BJ (cell line): ENCODE measurements at regions of chr19 and their contacts with region 1.

Region 1: DNA sequence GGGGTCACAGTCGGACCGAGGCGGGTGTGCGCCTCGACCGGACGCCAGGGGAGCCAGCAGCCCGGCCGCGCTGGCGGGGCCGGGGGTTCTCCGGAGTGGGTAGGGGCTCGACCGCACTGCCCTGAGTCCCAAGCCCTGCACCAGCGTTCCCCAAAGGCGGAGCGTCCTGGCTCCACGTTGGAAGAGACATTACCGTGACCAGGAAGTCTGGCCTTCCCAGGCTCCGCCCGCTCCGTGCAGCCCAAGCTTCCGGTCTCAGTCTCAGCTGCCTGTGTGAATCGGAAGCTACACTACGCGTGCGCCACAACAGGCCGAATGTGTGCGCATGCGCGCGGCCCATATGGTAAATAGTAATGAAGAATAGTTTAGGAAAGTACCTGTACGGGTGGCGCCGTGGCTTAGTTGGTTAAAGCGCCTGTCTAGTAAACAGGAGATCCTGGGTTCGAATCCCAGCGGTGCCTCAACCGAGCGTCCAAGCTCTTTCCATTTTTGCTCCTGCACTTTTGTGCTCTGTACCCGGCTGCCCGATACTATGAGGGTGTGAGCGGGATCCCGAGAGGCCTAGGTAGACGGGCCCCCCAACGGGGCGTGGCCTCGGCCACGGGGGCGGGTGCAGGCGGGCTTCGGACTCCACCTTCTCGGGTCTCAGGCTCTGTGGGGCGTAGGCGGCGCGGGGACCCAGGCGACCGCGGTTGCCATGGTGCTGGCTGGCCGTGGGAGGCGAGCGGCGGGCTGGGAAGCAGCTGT is 17.3 kb upstream of the LRP3 start:
- DNase-seq: peak; percentile 93
- H3K4me3 ChIP-seq: peak overlapping the region; percentile 86
- H3K27me3 ChIP-seq: no peaks in the 10 kb centered on the region
- CTCF ChIP-seq: 0 out of 2 replicates have a peak, but pooled peaks have one; percentile 21

Region 2: GRCh38 chr19:33125929-33126388 is 50.9 kb before region 1 on chr19:
- CTCF ChIA-PET with region 1: interaction called, 35 read pairs
- POLR2A ChIA-PET with region 1: no interaction called
- DNase-seq: no peak
- H3K4me3 ChIP-seq: no peak overlapping the region
- H3K27me3 ChIP-seq: no peaks in the 10 kb centered on the region
- CTCF ChIP-seq: peak; percentile 88

Region 3: GRCh38 chr19:33143897-33144405 is 32.9 kb before region 1 on chr19:
- CTCF ChIA-PET with region 1: interaction called, 23 read pairs
- POLR2A ChIA-PET with region 1: no interaction called
- DNase-seq: no peak
- H3K4me3 ChIP-seq: no peak overlapping the region
- H3K27me3 ChIP-seq: no peaks in the 10 kb centered on the region
- CTCF ChIP-seq: peak; percentile 95

Region 4: GRCh38 chr19:33156334-33156733 is 20.5 kb before region 1 on chr19:
- CTCF ChIA-PET with region 1: interaction called, 14 read pairs
- POLR2A ChIA-PET with region 1: no interaction called
- DNase-seq: no peak
- H3K4me3 ChIP-seq: no peak overlapping the region
- H3K27me3 ChIP-seq: no peaks in the 10 kb centered on the region; the same call in 1 of the 2 replicates
- CTCF ChIP-seq: no peak

Region 5: GRCh38 chr19:33193865-33194362 is 17.1 kb after region 1 on chr19 and contains the start of gene LRP3:
- CTCF ChIA-PET with region 1: interaction called, 17 read pairs
- POLR2A ChIA-PET with region 1: no interaction called
- DNase-seq: no peak
- H3K4me3 ChIP-seq: peak within 1 kb of the TSS; percentile 53
- H3K27me3 ChIP-seq: peaks cover 5% of the 10 kb centered on the region
- CTCF ChIP-seq: no peak
- polyA plus RNA-seq, gene LRP3: 11.5 and 16.1 TPM in 2 replicates

Region 6: DNA sequence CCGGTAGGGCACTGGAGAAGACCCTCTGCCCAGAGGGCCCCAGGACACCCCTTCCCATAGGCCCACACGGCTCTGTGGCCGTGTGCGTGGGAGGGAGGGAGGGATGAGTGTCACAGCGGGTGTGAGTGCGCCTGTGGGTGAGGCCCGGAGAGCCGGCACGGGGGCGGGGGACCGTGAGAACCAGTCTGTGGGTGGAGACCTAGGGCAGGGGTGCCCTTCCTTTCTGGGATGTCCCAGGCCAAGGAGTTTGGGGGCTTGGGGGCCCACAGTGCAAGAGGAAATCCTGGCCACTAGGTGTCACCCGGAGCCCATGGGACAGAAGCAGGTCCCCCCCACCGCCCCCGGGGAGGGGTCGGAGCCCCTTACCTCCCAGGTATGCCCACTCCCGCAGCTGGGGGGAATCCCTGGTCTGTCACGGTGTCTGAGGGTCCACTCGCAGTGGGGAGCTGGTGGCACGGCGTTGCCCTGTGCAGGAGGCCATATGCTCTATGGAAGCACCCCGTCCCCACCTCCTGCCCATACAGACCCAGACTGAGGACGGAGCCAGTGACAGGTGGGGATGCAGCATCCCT is 64.8 kb after region 1 on chr19:
- CTCF ChIA-PET with region 1: no interaction called
- POLR2A ChIA-PET with region 1: no interaction called
- DNase-seq: no peak
- H3K4me3 ChIP-seq: no peak overlapping the region
- H3K27me3 ChIP-seq: peaks cover 7% of the 10 kb centered on the region; the same call in 1 of the 2 replicates
- CTCF ChIP-seq: peak; percentile 68